Panc1 (cell line): ENCODE measurements at regions of chr3 and their contacts with region 1.

Region 1: GRCh38 chr3:106609666-106610301 is 741.0 kb upstream of the CBLB start:
- DNase-seq: peak; percentile 60
- ATAC-seq: peak; percentile 81; the same call in 1 of the 2 replicates
- H3K4me3 ChIP-seq: no peak overlapping the region
- H3K27ac ChIP-seq: no peak overlapping the region
- H3K4me1 ChIP-seq: no peaks in the 10 kb centered on the region
- H3K27me3 ChIP-seq: no peaks in the 10 kb centered on the region
- CTCF ChIP-seq: peak; percentile 88

Region 2: GRCh38 chr3:105686278-105686897 is 923.4 kb before region 1 on chr3:
- CTCF ChIA-PET with region 1: no interaction called
- POLR2A ChIA-PET with region 1: no interaction called
- in situ Hi-C with region 1: no loop called
- intact Hi-C with region 1: loop called (anchors 5 kb)
- DNase-seq: no peak
- ATAC-seq: no peak
- H3K4me3 ChIP-seq: no peak overlapping the region
- H3K27ac ChIP-seq: no peak overlapping the region
- H3K4me1 ChIP-seq: no peaks in the 10 kb centered on the region
- H3K27me3 ChIP-seq: no peaks in the 10 kb centered on the region
- CTCF ChIP-seq: peak; percentile 77; the same call in 1 of the 2 replicates

Region 3: DNA sequence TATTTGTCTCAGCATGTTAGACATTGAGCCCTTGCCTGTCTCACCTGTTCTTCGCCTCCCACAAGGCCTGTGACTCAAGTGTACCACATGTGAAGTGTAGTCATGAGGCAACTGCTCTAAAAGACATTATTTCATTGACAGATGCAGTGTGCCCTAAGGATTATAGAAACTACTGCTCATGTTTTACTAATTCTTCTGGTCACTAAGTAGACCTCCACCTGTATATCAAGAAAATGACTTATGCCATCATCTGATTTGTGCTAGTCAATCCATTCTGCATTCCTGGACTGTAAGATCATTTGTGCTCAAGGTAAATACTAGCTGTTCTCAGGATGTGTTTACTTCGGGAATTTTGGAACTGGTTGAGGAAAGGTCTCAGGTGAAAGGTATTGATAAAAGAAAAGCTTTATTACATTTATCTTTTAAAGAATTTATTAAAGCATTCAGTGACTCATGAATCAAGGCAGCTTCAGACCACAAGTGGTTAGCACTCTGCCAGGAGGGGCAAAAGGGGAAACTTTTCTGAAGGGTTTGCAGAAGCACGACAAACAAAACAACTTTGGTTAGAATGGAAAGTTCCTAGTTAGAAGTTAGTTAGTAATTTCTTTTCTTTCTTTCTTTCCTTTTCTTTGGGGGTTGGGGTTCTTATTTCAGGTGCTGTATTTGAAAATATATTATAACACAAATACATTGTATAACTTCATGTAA is 275.7 kb before region 1 on chr3:
- CTCF ChIA-PET with region 1: no interaction called
- POLR2A ChIA-PET with region 1: no interaction called
- in situ Hi-C with region 1: no loop called
- intact Hi-C with region 1: no loop called
- DNase-seq: no peak
- ATAC-seq: no peak
- H3K4me3 ChIP-seq: no peak overlapping the region
- H3K27ac ChIP-seq: no peak overlapping the region
- H3K4me1 ChIP-seq: no peaks in the 10 kb centered on the region
- H3K27me3 ChIP-seq: no peaks in the 10 kb centered on the region
- CTCF ChIP-seq: no peak

Region 4: DNA sequence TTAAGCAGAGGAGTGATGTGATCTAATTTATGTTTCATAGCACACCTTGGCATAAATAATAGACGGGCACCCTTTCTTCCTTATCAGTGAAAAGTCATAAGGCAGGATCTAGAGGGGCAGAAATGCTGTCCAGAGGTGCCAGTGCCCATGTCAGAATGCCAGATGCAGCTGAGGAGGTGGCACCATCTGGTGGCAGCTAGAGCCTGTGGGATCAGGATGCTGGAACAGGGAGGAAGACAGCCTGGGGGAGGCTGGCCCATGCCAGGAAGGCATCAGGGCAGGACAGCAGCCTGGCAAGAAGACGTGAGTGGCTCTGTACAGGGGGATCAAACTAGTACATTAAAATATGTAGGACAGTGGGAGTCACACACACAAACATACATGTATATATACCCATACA is 1884.1 kb after region 1 on chr3:
- CTCF ChIA-PET with region 1: no interaction called
- POLR2A ChIA-PET with region 1: no interaction called
- in situ Hi-C with region 1: no loop called
- intact Hi-C with region 1: no loop called
- DNase-seq: no peak
- ATAC-seq: peak; percentile 88
- H3K4me3 ChIP-seq: no peak overlapping the region
- H3K27ac ChIP-seq: no peak overlapping the region
- H3K4me1 ChIP-seq: no peaks in the 10 kb centered on the region
- H3K27me3 ChIP-seq: no peaks in the 10 kb centered on the region
- CTCF ChIP-seq: peak; percentile 77